PC-9 (cell line): ENCODE measurements at regions of chr11 and their contacts with region 1.

Region 1: DNA sequence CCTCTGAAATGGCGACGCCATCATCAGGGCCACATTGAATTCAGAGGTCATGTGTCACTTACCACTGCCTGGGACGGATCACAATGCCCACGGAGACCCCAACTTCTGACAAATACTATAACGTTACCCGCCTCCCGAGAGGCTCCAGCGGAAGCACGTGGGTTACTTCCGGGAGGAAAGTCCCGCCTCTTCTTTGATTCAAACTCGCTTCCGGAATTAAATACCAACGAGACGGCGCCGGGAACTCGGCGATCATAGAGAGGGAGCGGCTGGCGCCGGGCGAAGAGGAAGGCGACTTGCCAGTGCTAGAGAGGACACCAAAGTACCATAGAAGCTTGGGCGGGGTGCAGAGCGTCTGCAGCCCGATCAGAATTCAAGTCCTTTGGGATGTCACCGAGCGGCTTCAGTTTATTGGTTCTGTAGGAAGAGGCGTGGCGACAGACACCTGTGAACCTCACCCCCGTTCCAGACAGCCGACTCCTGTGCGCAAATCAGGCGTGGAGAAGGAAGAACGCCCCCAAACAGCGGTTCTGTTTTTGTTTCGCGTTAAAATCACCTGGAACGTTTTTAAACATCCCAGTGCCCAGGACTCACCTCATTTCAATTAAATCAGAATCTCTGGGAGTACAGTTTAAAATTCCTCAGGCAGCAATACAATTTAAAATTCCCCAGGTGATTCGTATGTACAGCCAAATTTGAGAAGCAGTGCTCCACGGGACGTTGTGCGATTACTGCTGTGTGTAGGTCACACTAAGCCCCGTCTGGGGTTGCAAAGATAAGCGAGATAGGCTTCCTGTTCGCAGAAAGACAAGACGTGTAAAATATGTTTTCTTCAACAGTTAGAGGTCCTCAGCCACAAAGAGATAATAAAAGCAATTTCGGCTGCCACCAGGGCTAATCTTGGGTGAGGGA is at the start of gene TIMM10:
- DNase-seq: peak; percentile 98 to 99
- H3K4me3 ChIP-seq: peak within 1 kb of the TSS; percentile 83
- H3K27ac ChIP-seq: peak within 1 kb of the TSS; percentile 48
- H3K4me1 ChIP-seq: peaks cover 27% of the 10 kb centered on the region
- H3K27me3 ChIP-seq: peaks cover 4% of the 10 kb centered on the region; the same call in 1 of the 2 replicates
- CTCF ChIP-seq: peak; percentile 23; the same call in 1 of the 2 replicates
- total RNA-seq, gene TIMM10: 90.2 and 94.7 TPM in 2 replicates

Region 2: GRCh38 chr11:57567515-57568329 is 36.9 kb after region 1 on chr11 and contains the start of gene UBE2L6:
- CTCF ChIA-PET with region 1: interaction called, 3 read pairs
- POLR2A ChIA-PET with region 1: no interaction called
- intact Hi-C with region 1: loop called (anchors 1 kb)
- DNase-seq: peak in 1 of 2 experiments; percentile 62
- H3K4me3 ChIP-seq: peak within 1 kb of the TSS; percentile 89
- H3K27ac ChIP-seq: no peak within 1 kb of the TSS
- H3K4me1 ChIP-seq: peaks cover 24% of the 10 kb centered on the region
- H3K27me3 ChIP-seq: no peaks in the 10 kb centered on the region
- CTCF ChIP-seq: no peak
- total RNA-seq, gene UBE2L6: 121 and 122 TPM in 2 replicates

Region 3: GRCh38 chr11:57604296-57605027 is 73.6 kb after region 1 on chr11:
- CTCF ChIA-PET with region 1: no interaction called
- POLR2A ChIA-PET with region 1: no interaction called
- intact Hi-C with region 1: no loop called
- DNase-seq: no peak
- H3K4me3 ChIP-seq: no peak overlapping the region
- H3K27ac ChIP-seq: no peak overlapping the region
- H3K4me1 ChIP-seq: no peaks in the 10 kb centered on the region
- H3K27me3 ChIP-seq: peaks cover 51% of the 10 kb centered on the region
- CTCF ChIP-seq: no peak

Region 4: GRCh38 chr11:57657194-57658022 is 126.6 kb after region 1 on chr11 and contains the start of gene CLP1:
- CTCF ChIA-PET with region 1: no interaction called
- POLR2A ChIA-PET with region 1: no interaction called
- intact Hi-C with region 1: loop called (anchors 5 kb)
- DNase-seq: peak; percentile 98 to 100
- H3K4me3 ChIP-seq: peak within 1 kb of the TSS; percentile 96
- H3K27ac ChIP-seq: peak within 1 kb of the TSS; percentile 25
- H3K4me1 ChIP-seq: peaks cover 7% of the 10 kb centered on the region
- H3K27me3 ChIP-seq: no peaks in the 10 kb centered on the region
- CTCF ChIP-seq: peak; percentile 13; the same call in 1 of the 2 replicates
- total RNA-seq, gene CLP1: 23.4 and 24.2 TPM in 2 replicates

Region 5: DNA sequence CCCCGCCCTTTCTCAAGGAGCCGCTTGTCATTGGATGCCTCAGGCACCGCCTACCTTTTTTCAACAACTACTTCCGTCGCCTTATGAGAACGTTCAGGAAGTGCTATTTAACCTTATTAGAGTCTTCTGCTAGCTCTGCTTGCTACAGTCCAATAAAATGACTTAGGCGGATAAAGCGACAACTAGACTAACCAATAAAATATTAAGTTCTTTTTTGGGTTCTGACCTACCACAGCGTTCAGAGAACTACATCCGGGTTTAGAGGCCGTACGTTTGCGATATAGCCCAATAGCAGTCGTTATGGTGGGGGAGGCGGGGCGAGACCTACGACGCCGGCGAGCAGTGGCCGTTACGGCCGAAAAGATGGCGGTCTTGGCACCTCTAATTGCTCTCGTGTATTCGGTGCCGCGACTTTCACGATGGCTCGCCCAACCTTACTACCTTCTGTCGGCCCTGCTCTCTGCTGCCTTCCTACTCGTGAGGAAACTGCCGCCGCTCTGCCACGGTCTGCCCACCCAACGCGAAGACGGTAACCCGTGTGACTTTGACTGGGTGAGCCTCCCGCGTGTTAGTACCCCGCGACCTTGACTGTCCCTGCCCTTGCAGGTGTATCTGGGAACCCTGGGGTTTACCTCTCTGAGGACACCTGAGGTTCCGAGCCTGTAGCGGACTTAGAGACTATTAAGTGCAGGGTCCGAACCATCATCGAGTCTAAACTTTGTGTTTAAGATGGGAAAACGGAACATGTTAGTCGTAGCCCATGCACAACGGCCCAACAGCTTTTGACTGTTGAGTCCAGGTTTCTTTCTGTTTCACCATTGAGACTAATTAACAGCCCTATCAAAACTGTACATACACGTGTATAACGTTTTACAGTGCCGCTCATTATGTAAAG is 181.7 kb after region 1 on chr11 and contains the start of gene TMX2:
- CTCF ChIA-PET with region 1: no interaction called
- POLR2A ChIA-PET with region 1: no interaction called
- intact Hi-C with region 1: loop called (anchors 2 kb)
- DNase-seq: peak; percentile 94 to 100
- H3K4me3 ChIP-seq: peak within 1 kb of the TSS; percentile 97
- H3K27ac ChIP-seq: peak within 1 kb of the TSS; percentile 75
- H3K4me1 ChIP-seq: peaks cover 25% of the 10 kb centered on the region
- H3K27me3 ChIP-seq: no peaks in the 10 kb centered on the region
- CTCF ChIP-seq: no peak
- total RNA-seq, gene TMX2: 124 and 138 TPM in 2 replicates

Region 6: DNA sequence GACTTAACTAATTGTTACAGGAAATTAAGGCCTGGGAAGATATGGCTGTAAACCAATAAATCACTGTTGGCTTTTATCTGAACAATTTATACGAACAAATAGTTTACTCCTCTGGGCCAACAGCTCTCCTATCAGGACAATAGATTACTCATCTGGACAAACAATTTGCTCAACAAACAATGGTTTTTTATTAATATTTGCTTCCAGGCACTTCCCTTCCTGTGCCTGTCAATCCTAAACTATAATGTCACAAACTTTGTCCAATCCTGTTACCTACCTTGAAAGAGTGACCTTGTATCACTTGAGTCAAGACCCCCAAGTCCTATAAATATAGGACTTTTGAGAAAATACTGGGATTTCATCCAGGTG is 405.2 kb after region 1 on chr11:
- CTCF ChIA-PET with region 1: no interaction called
- POLR2A ChIA-PET with region 1: no interaction called
- intact Hi-C with region 1: no loop called
- DNase-seq: no peak
- H3K4me3 ChIP-seq: no peak overlapping the region
- H3K27ac ChIP-seq: no peak overlapping the region
- H3K4me1 ChIP-seq: no peaks in the 10 kb centered on the region
- H3K27me3 ChIP-seq: peaks cover 39% of the 10 kb centered on the region; the same call in 1 of the 2 replicates
- CTCF ChIP-seq: no peak